ENCODE measurements at regions of chr17 and their contacts with region 1.

Region 1: DNA sequence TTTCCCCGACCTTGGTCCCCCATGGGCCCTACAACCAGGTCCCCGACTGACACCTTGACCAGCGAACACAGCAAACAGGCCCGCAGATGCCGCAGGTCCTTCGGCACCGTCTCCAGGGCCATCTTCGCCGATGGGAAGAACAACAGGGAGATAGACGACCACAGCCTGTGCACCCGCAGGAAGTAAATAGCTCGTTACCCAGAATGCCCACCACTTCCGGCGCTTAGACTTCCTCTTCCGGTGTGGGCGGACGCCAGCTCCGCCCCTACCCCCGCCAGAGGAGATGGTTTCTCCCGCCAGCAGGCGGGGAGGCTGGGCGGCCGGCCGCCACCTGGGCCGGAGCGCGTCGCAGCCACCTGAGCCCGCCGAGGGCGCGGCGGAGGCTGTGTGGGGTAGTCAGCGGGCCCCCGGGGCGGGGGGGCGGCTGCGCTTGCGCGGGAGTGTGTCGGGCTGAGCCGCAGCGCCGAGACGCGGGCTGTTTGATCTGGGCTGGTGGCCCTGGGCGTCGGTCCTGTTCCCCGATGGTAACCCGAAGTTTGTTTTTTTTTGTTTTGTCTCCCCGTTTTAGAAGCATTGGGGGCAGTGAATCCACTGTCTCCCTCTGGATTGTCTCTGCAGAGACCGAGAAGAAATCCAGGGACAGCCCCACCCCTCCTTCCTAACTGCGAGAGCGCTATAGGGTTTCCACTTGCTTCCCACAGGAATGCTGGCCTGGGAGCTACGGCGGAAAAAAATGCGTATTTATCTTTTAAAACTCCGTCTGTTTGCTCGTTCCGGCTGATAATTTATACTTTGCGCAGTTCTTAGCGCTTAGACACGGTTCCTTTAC is at the start of gene SUPT4H1:
- DNase-seq: peak; percentile 95
- H3K4me3 ChIP-seq: peak within 1 kb of the TSS; percentile 84
- H3K27ac ChIP-seq: peak within 1 kb of the TSS; percentile 79
- H3K4me1 ChIP-seq: no peaks in the 10 kb centered on the region
- H3K27me3 ChIP-seq: no peaks in the 10 kb centered on the region
- CTCF ChIP-seq: no peak
- total RNA-seq, gene SUPT4H1: 93.1 and 106 TPM in 2 replicates

Region 2: GRCh38 chr17:57092171-57092570 is 1260.1 kb before region 1 on chr17:
- CTCF ChIA-PET with region 1: no interaction called
- POLR2A ChIA-PET with region 1: interaction called, 22 read pairs
- intact Hi-C with region 1: no loop called
- DNase-seq: no peak
- H3K4me3 ChIP-seq: no peak overlapping the region
- H3K27ac ChIP-seq: no peak overlapping the region
- H3K4me1 ChIP-seq: peaks cover 5% of the 10 kb centered on the region
- H3K27me3 ChIP-seq: no peaks in the 10 kb centered on the region
- CTCF ChIP-seq: no peak

Region 3: GRCh38 chr17:58136669-58137283 is 215.5 kb before region 1 on chr17:
- CTCF ChIA-PET with region 1: no interaction called
- POLR2A ChIA-PET with region 1: no interaction called
- intact Hi-C with region 1: no loop called
- DNase-seq: peak; percentile 41
- H3K4me3 ChIP-seq: no peak overlapping the region
- H3K27ac ChIP-seq: no peak overlapping the region
- H3K4me1 ChIP-seq: no peaks in the 10 kb centered on the region
- H3K27me3 ChIP-seq: peaks cover 83% of the 10 kb centered on the region
- CTCF ChIP-seq: peak; percentile 66

Region 4: GRCh38 chr17:58427807-58428206 is 75.6 kb after region 1 on chr17:
- CTCF ChIA-PET with region 1: no interaction called
- POLR2A ChIA-PET with region 1: no interaction called
- intact Hi-C with region 1: no loop called
- DNase-seq: no peak
- H3K4me3 ChIP-seq: no peak overlapping the region
- H3K27ac ChIP-seq: no peak overlapping the region
- H3K4me1 ChIP-seq: no peaks in the 10 kb centered on the region
- H3K27me3 ChIP-seq: peaks cover 3% of the 10 kb centered on the region
- CTCF ChIP-seq: no peak

Region 5: GRCh38 chr17:59533717-59534116 is 1181.5 kb after region 1 on chr17:
- CTCF ChIA-PET with region 1: no interaction called
- POLR2A ChIA-PET with region 1: interaction called, 15 read pairs
- intact Hi-C with region 1: no loop called
- DNase-seq: no peak
- H3K4me3 ChIP-seq: no peak overlapping the region
- H3K27ac ChIP-seq: no peak overlapping the region
- H3K4me1 ChIP-seq: no peaks in the 10 kb centered on the region
- H3K27me3 ChIP-seq: peaks cover 25% of the 10 kb centered on the region
- CTCF ChIP-seq: no peak